Heart right ventricle (tissue), 16 donors: ENCODE measurements at regions of chr17 and their contacts with region 1.

Region 1: GRCh38 chr17:74493381-74493833 is 27.0 kb downstream of the CD300A start:
- DNase-seq: peak; percentile 65 to 66
- ATAC-seq: peak; percentile 64 to 85 (median 73)
- H3K4me3 ChIP-seq: no peak overlapping the region
- H3K27ac ChIP-seq: no peak overlapping the region
- H3K4me1 ChIP-seq: no peaks in the 10 kb centered on the region
- H3K27me3 ChIP-seq: peaks cover 0 to 16% (median 0%) of the 10 kb centered on the region in 7 donors
- CTCF ChIP-seq: peak; percentile 68 to 90 (median 85)

Region 2: GRCh38 chr17:74368092-74369081 is 125.0 kb before region 1 on chr17:
- intact Hi-C with region 1: loop called in 6 of 10 experiments (anchors 1 to 10 kb)
- DNase-seq: peak; percentile 75 to 77
- ATAC-seq: peak; percentile 73 to 92 (median 81)
- H3K4me3 ChIP-seq: peak overlapping the region in 6 of 10 donors; percentile 4 to 38 (median 15)
- H3K27ac ChIP-seq: no peak overlapping the region
- H3K4me1 ChIP-seq: peaks cover 4 to 16% (median 13%) of the 10 kb centered on the region in 9 donors
- H3K27me3 ChIP-seq: peaks cover 0 to 15% (median 0%) of the 10 kb centered on the region in 7 donors
- CTCF ChIP-seq: peak; percentile 85 to 96 (median 92)

Region 3: GRCh38 chr17:74541176-74542111 is 48.0 kb after region 1 on chr17:
- intact Hi-C with region 1: no loop called
- DNase-seq: no peak
- ATAC-seq: no peak
- H3K4me3 ChIP-seq: no peak overlapping the region
- H3K27ac ChIP-seq: no peak overlapping the region
- H3K4me1 ChIP-seq: no peaks in the 10 kb centered on the region
- H3K27me3 ChIP-seq: peaks cover 0 to 5% (median 3%) of the 10 kb centered on the region in 7 donors
- CTCF ChIP-seq: no peak